Activated CD4-positive, alpha-beta memory T cell treated with anti-CD3 and anti-CD28 coated beads for 36 hours (primary cell): ENCODE measurements at regions of chr7 and their contacts with region 1.

Region 1: DNA sequence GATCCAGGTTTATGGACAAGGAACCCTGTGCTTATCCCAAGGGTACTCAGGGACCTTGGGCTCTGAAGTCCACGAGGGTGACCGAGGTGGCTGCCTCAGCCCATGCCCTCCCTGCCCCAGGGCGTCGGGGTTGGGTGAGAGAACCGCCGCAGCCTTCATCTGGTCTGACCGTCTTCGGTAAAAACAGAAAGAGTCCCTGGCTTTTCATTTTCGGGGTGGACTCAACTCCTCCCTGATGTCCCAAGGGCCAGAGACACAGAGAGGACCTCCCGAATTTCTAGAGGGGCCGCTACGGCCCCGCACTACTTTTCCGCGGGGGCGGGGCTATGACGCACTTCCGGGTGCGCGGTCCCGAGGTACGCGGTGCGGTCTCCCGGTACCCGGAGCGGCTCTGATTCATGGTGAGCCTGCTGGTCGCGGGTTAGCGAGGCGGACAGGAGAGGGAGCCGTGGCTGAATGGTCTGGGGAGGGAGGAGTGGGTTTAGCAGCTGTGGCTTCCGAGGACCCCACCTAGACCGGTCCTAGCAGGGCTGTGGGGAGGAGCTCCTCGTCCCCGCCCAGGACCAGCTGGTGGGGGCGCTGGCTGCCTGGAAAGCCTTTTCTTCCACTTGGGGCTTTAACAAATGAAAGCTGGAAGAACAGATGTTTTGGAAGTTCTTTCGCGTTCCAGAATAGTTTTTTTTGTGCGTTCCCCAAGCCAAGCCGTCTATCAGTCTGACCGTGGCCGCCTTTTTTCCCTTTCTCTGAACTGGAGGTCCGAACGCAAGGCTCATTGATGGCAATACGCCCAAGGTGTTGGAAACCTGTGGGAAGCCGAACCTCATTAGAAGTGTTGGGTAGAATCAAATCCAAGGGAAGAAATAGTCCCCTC is at the start of gene ZSCAN21:
- DNase-seq: peak; percentile 88
- H3K4me3 Mint-ChIP-seq: peak within 1 kb of the TSS; percentile 84
- H3K27ac Mint-ChIP-seq: peak within 1 kb of the TSS; percentile 86
- H3K4me1 Mint-ChIP-seq: peaks cover 14% of the 10 kb centered on the region
- H3K27me3 Mint-ChIP-seq: no peaks in the 10 kb centered on the region
- total RNA-seq, gene ZSCAN21: 6.2 TPM

Region 2: GRCh38 chr7:99514050-99514449 is 535.6 kb before region 1 on chr7:
- CTCF ChIA-PET with region 1: no interaction called
- POLR2A ChIA-PET with region 1: no interaction called
- intact Hi-C with region 1: no loop called
- DNase-seq: no peak
- H3K4me3 Mint-ChIP-seq: no peak overlapping the region
- H3K27ac Mint-ChIP-seq: no peak overlapping the region
- H3K4me1 Mint-ChIP-seq: peaks cover 8% of the 10 kb centered on the region
- H3K27me3 Mint-ChIP-seq: no peaks in the 10 kb centered on the region

Region 3: DNA sequence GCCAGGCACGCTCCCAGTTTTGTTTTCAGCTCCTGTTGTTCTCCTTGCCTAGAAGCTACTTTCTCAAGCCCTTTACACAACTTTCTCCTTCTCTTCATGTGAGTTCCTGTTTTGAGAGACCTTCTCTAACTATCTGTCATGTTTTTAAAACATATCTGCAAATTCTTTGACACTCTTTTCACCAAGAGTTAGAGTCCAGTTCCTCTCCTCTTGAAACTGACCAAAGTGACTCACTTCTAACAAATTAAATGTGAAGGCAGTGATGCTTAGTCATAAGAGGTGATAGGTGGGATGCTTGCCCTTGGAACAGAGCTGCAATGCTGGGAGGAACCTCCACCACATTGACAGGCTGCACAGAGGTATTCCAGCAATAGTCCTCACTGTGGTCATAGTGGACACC is 407.6 kb before region 1 on chr7:
- CTCF ChIA-PET with region 1: no interaction called
- POLR2A ChIA-PET with region 1: no interaction called
- intact Hi-C with region 1: no loop called
- DNase-seq: no peak
- H3K4me3 Mint-ChIP-seq: no peak overlapping the region
- H3K27ac Mint-ChIP-seq: no peak overlapping the region
- H3K4me1 Mint-ChIP-seq: peaks cover 26% of the 10 kb centered on the region
- H3K27me3 Mint-ChIP-seq: no peaks in the 10 kb centered on the region

Region 4: GRCh38 chr7:99910976-99911375 is 138.7 kb before region 1 on chr7:
- CTCF ChIA-PET with region 1: interaction called, 11 read pairs
- POLR2A ChIA-PET with region 1: no interaction called
- intact Hi-C with region 1: no loop called
- DNase-seq: no peak
- H3K4me3 Mint-ChIP-seq: no peak overlapping the region
- H3K27ac Mint-ChIP-seq: no peak overlapping the region
- H3K4me1 Mint-ChIP-seq: peaks cover 40% of the 10 kb centered on the region
- H3K27me3 Mint-ChIP-seq: no peaks in the 10 kb centered on the region

Region 5: DNA sequence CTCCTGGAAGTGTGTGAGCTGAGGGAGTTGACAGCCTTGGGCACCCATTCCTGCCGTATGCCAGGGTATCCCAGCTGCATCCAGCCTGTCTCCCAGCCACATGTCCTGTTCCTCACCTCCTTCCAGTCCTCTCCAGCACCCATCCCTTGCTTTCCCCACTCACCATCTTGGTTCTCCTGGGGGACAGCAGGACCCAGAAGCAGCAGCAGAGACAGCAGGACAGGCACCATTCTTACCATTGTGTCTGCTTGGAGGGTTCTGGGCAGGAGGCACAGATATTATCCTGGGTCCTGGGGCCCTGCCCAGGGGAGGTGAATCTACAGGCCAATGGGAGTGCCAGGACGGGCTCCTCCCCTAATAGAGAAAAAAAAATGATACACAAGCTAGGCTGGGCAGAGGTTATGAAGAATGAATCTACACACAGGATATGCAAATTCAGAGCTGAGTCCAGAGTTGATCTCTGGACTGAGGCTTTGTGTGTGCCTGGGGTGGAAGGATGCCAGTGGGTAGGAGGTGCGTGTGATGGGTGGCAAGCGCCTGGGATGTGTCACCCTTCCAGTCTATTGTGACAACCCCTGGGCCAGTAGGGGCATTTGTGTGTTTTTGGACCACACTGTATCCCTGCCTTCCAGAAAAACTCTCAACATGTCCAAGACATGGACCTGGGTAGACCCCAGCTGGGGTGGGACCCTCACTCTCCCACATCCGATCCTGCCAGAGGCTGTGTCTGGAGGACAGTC is 73.7 kb before region 1 on chr7 and contains the start of gene AZGP1:
- CTCF ChIA-PET with region 1: interaction called, 12 read pairs
- POLR2A ChIA-PET with region 1: no interaction called
- intact Hi-C with region 1: no loop called
- DNase-seq: no peak
- H3K4me3 Mint-ChIP-seq: no peak within 1 kb of the TSS
- H3K27ac Mint-ChIP-seq: no peak within 1 kb of the TSS
- H3K4me1 Mint-ChIP-seq: no peaks in the 10 kb centered on the region
- H3K27me3 Mint-ChIP-seq: no peaks in the 10 kb centered on the region
- total RNA-seq, gene AZGP1: not detected

Region 6: DNA sequence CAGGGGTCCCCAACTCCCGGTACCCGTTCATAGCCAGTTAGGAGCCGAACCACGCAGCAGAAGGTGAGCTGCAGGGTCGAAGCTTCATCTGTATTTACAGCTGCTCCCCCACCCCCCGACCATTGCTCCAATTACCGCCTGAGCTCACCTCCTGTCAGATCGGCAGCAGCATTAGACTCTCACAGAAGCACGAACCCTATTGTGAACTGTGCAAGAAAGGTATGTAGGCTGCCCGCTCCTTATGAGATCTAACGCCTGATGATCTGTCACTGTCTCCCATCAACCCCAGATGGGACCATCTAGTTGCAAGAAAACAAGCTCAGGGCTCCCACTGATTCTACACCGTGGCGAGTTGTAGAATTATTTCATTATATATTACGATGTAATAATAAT is 59.2 kb before region 1 on chr7:
- CTCF ChIA-PET with region 1: interaction called, 12 read pairs
- POLR2A ChIA-PET with region 1: no interaction called
- intact Hi-C with region 1: loop called (anchors 1 kb)
- DNase-seq: no peak
- H3K4me3 Mint-ChIP-seq: no peak overlapping the region
- H3K27ac Mint-ChIP-seq: no peak overlapping the region
- H3K4me1 Mint-ChIP-seq: no peaks in the 10 kb centered on the region
- H3K27me3 Mint-ChIP-seq: no peaks in the 10 kb centered on the region

Region 7: GRCh38 chr7:99997545-99998137 is 52.0 kb before region 1 on chr7:
- CTCF ChIA-PET with region 1: interaction called, 11 read pairs
- POLR2A ChIA-PET with region 1: no interaction called
- intact Hi-C with region 1: loop called (anchors 1 kb)
- DNase-seq: peak; percentile 82
- H3K4me3 Mint-ChIP-seq: peak overlapping the region; percentile 70
- H3K27ac Mint-ChIP-seq: peak overlapping the region; percentile 56
- H3K4me1 Mint-ChIP-seq: peaks cover 9% of the 10 kb centered on the region
- H3K27me3 Mint-ChIP-seq: no peaks in the 10 kb centered on the region

Region 8: GRCh38 chr7:100081535-100082102 is 31.9 kb after region 1 on chr7 and contains the start of gene ZNF3:
- CTCF ChIA-PET with region 1: interaction called, 3 read pairs
- POLR2A ChIA-PET with region 1: interaction called, 4 read pairs
- intact Hi-C with region 1: loop called (anchors 1 kb)
- DNase-seq: peak; percentile 99
- H3K4me3 Mint-ChIP-seq: peak within 1 kb of the TSS; percentile 83
- H3K27ac Mint-ChIP-seq: peak within 1 kb of the TSS; percentile 85
- H3K4me1 Mint-ChIP-seq: peaks cover 29% of the 10 kb centered on the region
- H3K27me3 Mint-ChIP-seq: no peaks in the 10 kb centered on the region
- total RNA-seq, gene ZNF3: 18.0 to 18.6 TPM

Region 9: DNA sequence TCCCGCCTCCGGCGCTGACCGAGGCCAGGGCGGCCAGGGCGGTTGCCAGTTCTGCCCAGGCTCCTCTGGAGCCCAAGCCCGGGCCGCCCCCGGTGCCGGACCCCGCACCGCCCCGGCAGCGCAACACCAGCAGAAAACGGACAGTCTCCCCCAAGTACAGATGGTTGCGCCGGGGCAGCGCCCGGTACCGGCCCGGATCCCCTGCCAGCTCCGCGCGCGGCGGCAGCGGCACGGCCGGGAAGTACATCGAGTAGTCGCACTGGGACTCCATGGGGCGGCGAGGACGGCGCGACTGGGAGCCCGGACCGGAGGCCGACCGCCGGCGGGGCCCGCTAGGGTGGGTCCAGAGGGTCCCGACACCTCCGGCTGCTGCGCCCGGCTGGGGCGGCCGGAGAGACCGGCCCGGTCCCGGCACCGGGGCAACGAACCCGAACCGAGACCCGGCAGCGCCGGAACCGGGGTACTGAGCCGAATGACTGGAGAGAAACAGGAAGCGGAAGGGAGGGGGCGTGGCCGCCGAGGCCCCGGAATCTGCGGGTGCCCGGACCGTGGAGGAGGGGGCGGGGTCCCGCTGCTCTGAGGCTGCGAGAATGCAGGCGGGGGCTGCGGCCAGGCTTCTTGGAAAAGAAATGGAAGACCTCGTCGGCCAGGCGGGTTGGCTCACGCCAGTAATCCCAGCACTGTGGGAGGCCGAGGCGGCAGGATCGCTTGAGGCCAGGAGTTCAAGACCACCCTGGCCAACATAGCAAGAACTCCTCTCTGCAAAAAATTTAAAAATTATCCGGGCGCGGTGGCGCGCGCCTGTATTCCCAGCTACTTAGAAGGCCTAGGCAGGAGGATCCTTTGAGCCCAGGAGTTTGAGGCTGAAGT is 108.8 kb after region 1 on chr7 and contains the start of gene TRAPPC14:
- CTCF ChIA-PET with region 1: no interaction called
- POLR2A ChIA-PET with region 1: no interaction called
- intact Hi-C with region 1: no loop called
- DNase-seq: peak; percentile 94
- H3K4me3 Mint-ChIP-seq: peak within 1 kb of the TSS; percentile 78
- H3K27ac Mint-ChIP-seq: peak within 1 kb of the TSS; percentile 89
- H3K4me1 Mint-ChIP-seq: peaks cover 40% of the 10 kb centered on the region
- H3K27me3 Mint-ChIP-seq: no peaks in the 10 kb centered on the region
- total RNA-seq, gene TRAPPC14: 17.9 to 19.7 TPM